ENCODE measurements at regions of chr15 and their contacts with region 1.

Region 1: GRCh38 chr15:78308422-78309032 is 9.1 kb upstream of the SKIC8 start:
- DNase-seq: peak; percentile 26 to 55
- ATAC-seq: peak; percentile 52 to 71 (median 65)
- H3K4me3 ChIP-seq: no peak overlapping the region
- H3K4me3 Mint-ChIP-seq: no peak overlapping the region
- H3K27ac ChIP-seq: no peak overlapping the region
- H3K27ac Mint-ChIP-seq: no peak overlapping the region
- H3K4me1 ChIP-seq: no peaks in the 10 kb centered on the region
- H3K4me1 Mint-ChIP-seq: no peaks in the 10 kb centered on the region
- H3K27me3 ChIP-seq: no peaks in the 10 kb centered on the region
- H3K27me3 Mint-ChIP-seq: peaks cover 4 to 7% of the 10 kb centered on the region in 2 donors
- CTCF ChIP-seq: peak; percentile 44

Region 2: GRCh38 chr15:78265752-78266593 is 42.6 kb before region 1 on chr15:
- intact Hi-C with region 1: no loop called
- DNase-seq: peak in 1 of 2 donors; percentile 34
- ATAC-seq: no peak
- H3K4me3 ChIP-seq: no peak overlapping the region
- H3K4me3 Mint-ChIP-seq: peak overlapping the region; percentile 87
- H3K27ac ChIP-seq: no peak overlapping the region
- H3K27ac Mint-ChIP-seq: peak overlapping the region; percentile 78 to 82
- H3K4me1 ChIP-seq: peaks cover 10% of the 10 kb centered on the region
- H3K4me1 Mint-ChIP-seq: peaks cover 10 to 11% of the 10 kb centered on the region in 2 donors
- H3K27me3 ChIP-seq: no peaks in the 10 kb centered on the region
- H3K27me3 Mint-ChIP-seq: no peaks in the 10 kb centered on the region
- CTCF ChIP-seq: no peak

Region 3: GRCh38 chr15:78422571-78423340 is 114.2 kb after region 1 on chr15:
- intact Hi-C with region 1: loop called (anchors 1 kb)
- DNase-seq: peak; percentile 47 to 80
- ATAC-seq: peak; percentile 89 to 98 (median 96)
- H3K4me3 ChIP-seq: no peak overlapping the region
- H3K4me3 Mint-ChIP-seq: no peak overlapping the region
- H3K27ac ChIP-seq: no peak overlapping the region
- H3K27ac Mint-ChIP-seq: no peak overlapping the region
- H3K4me1 ChIP-seq: no peaks in the 10 kb centered on the region
- H3K4me1 Mint-ChIP-seq: peaks cover 0 to 7% of the 10 kb centered on the region in 2 donors
- H3K27me3 ChIP-seq: no peaks in the 10 kb centered on the region
- H3K27me3 Mint-ChIP-seq: peaks cover 15 to 30% of the 10 kb centered on the region in 2 donors
- CTCF ChIP-seq: peak; percentile 94

Region 4: GRCh38 chr15:78481917-78482316 is 173.4 kb after region 1 on chr15:
- intact Hi-C with region 1: loop called (anchors 10 kb)
- DNase-seq: no peak
- ATAC-seq: no peak
- H3K4me3 ChIP-seq: no peak overlapping the region
- H3K4me3 Mint-ChIP-seq: no peak overlapping the region
- H3K27ac ChIP-seq: no peak overlapping the region
- H3K27ac Mint-ChIP-seq: no peak overlapping the region
- H3K4me1 ChIP-seq: no peaks in the 10 kb centered on the region
- H3K4me1 Mint-ChIP-seq: no peaks in the 10 kb centered on the region
- H3K27me3 ChIP-seq: no peaks in the 10 kb centered on the region
- H3K27me3 Mint-ChIP-seq: no peaks in the 10 kb centered on the region
- CTCF ChIP-seq: no peak

Measured in natural killer cell (primary cell).